ENCODE measurements at regions of chr15 and their contacts with region 1.

Region 1: DNA sequence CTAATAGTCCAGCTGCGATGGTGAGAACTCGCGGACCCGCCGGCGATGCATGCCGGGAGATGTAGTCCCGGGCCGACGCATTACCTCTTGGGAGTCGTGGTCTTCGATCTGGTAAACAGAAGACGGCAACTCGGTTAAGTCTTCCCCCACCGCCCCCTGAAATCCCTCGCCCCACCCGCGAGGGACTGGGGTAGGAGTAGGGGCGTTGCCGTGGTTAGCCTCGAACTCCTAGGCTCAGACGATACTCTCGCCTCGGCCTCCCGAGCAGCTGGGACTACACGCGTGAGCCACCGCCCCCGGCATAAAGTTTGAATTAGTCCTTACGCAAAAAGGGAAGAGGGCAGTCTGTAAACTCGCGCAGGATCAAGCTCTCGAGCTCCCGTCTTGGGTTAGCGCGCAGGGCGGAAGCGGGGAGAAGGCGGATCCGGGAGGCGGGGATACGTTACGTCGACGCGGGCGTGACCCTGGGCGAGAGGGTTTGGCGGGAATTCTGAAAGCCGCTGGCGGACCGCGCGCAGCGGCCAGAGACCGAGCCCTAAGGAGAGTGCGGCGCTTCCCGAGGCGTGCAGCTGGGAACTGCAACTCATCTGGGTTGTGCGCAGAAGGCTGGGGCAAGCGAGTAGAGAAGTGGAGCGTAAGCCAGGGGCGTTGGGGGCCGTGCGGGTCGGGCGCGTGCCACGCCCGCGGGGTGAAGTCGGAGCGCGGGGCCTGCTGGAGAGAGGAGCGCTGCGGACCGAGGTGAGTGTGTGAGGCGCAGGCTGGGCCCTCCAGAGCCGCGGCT is at the start of gene RAD51:
- DNase-seq: peak; percentile 96
- ATAC-seq: peak; percentile 88
- H3K4me3 ChIP-seq: peak within 1 kb of the TSS; percentile 84 to 100 (median 87)
- H3K4me3 Mint-ChIP-seq: peak within 1 kb of the TSS; percentile 100
- H3K27ac ChIP-seq: peak within 1 kb of the TSS; percentile 93 to 94
- H3K27ac Mint-ChIP-seq: peak within 1 kb of the TSS; percentile 99
- H3K4me1 ChIP-seq: peaks cover 7 to 18% of the 10 kb centered on the region in 2 donors
- H3K4me1 Mint-ChIP-seq: peaks cover 25% of the 10 kb centered on the region
- H3K27me3 ChIP-seq: no peaks in the 10 kb centered on the region
- H3K27me3 Mint-ChIP-seq: no peaks in the 10 kb centered on the region
- CTCF ChIP-seq: no peak
- total RNA-seq, gene RAD51: 1.9 and 2.0 TPM in 2 replicates

Region 2: DNA sequence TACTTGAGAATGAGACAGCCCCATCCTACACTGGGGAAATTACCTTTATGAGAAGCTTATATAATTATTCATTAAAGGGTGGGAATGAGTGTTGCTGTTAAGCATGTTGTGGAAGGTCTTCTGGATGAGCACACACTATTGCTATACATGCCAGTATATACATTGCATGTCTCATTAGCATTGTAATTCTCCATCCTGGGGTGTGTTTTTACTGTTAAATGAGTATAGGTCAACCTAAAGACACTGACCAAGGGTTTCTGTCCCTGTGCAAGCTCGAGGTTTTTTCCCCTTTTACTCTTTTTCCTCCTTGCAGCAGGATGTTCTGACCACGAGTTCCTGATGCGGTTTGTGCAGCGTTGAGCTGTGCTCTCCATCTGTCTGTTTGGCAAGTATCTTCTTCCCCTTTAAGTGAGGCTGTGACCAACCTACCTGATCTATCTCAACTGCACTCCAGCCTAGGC is 296.4 kb before region 1 on chr15:
- CTCF ChIA-PET with region 1: no interaction called
- POLR2A ChIA-PET with region 1: no interaction called
- intact Hi-C with region 1: no loop called
- DNase-seq: peak; percentile 57
- ATAC-seq: peak; percentile 84
- H3K4me3 ChIP-seq: peak overlapping the region in 2 of 5 experiments; percentile 19 to 30
- H3K4me3 Mint-ChIP-seq: peak overlapping the region; percentile 71
- H3K27ac ChIP-seq: peak overlapping the region; percentile 2 to 27
- H3K27ac Mint-ChIP-seq: peak overlapping the region; percentile 74
- H3K4me1 ChIP-seq: peaks cover 17 to 21% of the 10 kb centered on the region in 2 donors
- H3K4me1 Mint-ChIP-seq: peaks cover 20% of the 10 kb centered on the region
- H3K27me3 ChIP-seq: no peaks in the 10 kb centered on the region
- H3K27me3 Mint-ChIP-seq: no peaks in the 10 kb centered on the region
- CTCF ChIP-seq: no peak

Region 3: DNA sequence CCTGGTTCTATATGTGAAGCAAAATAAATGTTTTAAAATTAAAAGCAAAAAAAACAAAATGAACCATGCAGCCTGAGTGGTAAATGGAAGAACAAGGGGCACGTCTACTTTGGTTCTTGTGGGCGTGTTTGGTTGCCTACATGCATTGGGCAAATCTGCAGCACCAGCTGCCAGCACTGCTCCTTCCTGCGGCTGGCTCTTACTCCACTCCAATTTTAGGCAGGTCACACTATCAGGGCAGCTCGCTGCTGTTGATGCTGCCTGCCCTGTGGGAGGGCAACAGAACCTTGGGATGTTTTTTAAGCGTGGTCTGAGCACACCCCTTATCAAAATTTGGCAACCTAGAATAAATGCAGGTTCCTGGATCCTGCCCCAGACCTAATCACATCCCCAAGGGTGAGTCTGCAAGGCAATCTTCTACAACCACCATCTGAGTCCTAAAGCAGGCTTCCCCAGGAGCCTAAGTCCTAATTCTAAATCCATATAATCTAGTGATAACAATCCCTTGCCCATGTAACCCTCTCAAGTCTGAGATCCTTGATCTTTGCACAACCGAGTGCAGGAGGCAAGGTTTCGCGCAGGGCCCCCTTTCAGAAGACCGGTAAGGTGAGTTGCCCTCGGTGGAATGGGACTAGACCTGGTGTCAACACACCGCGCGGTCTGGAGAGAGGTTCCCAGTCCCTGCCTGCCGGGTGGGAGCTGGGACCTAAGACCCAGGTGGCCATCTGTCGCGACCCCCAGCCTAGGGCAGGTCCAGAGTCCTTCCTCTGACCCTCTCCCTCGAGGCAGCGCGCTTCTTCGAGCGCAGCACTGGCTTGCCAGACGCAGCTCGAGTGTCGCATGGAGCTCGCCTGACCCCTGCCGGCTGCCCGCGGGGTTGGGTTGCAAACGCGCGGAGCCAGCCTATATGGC is 273.4 kb before region 1 on chr15:
- CTCF ChIA-PET with region 1: no interaction called
- POLR2A ChIA-PET with region 1: no interaction called
- intact Hi-C with region 1: no loop called
- DNase-seq: peak; percentile 83
- ATAC-seq: peak; percentile 96
- H3K4me3 ChIP-seq: no peak overlapping the region
- H3K4me3 Mint-ChIP-seq: no peak overlapping the region
- H3K27ac ChIP-seq: no peak overlapping the region
- H3K27ac Mint-ChIP-seq: no peak overlapping the region
- H3K4me1 ChIP-seq: peaks cover 4 to 7% of the 10 kb centered on the region in 2 donors
- H3K4me1 Mint-ChIP-seq: peaks cover 2% of the 10 kb centered on the region
- H3K27me3 ChIP-seq: no peaks in the 10 kb centered on the region
- H3K27me3 Mint-ChIP-seq: no peaks in the 10 kb centered on the region
- CTCF ChIP-seq: peak; percentile 97

Region 4: GRCh38 chr15:40525855-40526254 is 169.0 kb before region 1 on chr15:
- CTCF ChIA-PET with region 1: interaction called, 11 read pairs
- POLR2A ChIA-PET with region 1: no interaction called
- intact Hi-C with region 1: no loop called
- DNase-seq: no peak
- ATAC-seq: no peak
- H3K4me3 ChIP-seq: no peak overlapping the region
- H3K4me3 Mint-ChIP-seq: no peak overlapping the region
- H3K27ac ChIP-seq: no peak overlapping the region
- H3K27ac Mint-ChIP-seq: no peak overlapping the region
- H3K4me1 ChIP-seq: no peaks in the 10 kb centered on the region
- H3K4me1 Mint-ChIP-seq: peaks cover 2% of the 10 kb centered on the region
- H3K27me3 ChIP-seq: no peaks in the 10 kb centered on the region
- H3K27me3 Mint-ChIP-seq: no peaks in the 10 kb centered on the region
- CTCF ChIP-seq: no peak

Region 5: GRCh38 chr15:40660686-40661085 is 34.2 kb before region 1 on chr15:
- CTCF ChIA-PET with region 1: no interaction called
- POLR2A ChIA-PET with region 1: no interaction called
- intact Hi-C with region 1: no loop called
- DNase-seq: no peak
- ATAC-seq: no peak
- H3K4me3 ChIP-seq: no peak overlapping the region
- H3K4me3 Mint-ChIP-seq: no peak overlapping the region
- H3K27ac ChIP-seq: no peak overlapping the region
- H3K27ac Mint-ChIP-seq: no peak overlapping the region
- H3K4me1 ChIP-seq: no peaks in the 10 kb centered on the region
- H3K4me1 Mint-ChIP-seq: peaks cover 2% of the 10 kb centered on the region
- H3K27me3 ChIP-seq: no peaks in the 10 kb centered on the region
- H3K27me3 Mint-ChIP-seq: no peaks in the 10 kb centered on the region
- CTCF ChIP-seq: no peak

Region 6: GRCh38 chr15:40684381-40684780 is 10.5 kb before region 1 on chr15:
- CTCF ChIA-PET with region 1: interaction called, 25 read pairs
- POLR2A ChIA-PET with region 1: interaction called, 4 read pairs
- intact Hi-C with region 1: loop called (anchors 1 kb)
- DNase-seq: no peak
- ATAC-seq: no peak
- H3K4me3 ChIP-seq: no peak overlapping the region
- H3K4me3 Mint-ChIP-seq: no peak overlapping the region
- H3K27ac ChIP-seq: no peak overlapping the region
- H3K27ac Mint-ChIP-seq: peak overlapping the region; percentile 41
- H3K4me1 ChIP-seq: peaks cover 11 to 15% of the 10 kb centered on the region in 2 donors
- H3K4me1 Mint-ChIP-seq: peaks cover 12% of the 10 kb centered on the region
- H3K27me3 ChIP-seq: no peaks in the 10 kb centered on the region
- H3K27me3 Mint-ChIP-seq: no peaks in the 10 kb centered on the region
- CTCF ChIP-seq: no peak

Region 7: DNA sequence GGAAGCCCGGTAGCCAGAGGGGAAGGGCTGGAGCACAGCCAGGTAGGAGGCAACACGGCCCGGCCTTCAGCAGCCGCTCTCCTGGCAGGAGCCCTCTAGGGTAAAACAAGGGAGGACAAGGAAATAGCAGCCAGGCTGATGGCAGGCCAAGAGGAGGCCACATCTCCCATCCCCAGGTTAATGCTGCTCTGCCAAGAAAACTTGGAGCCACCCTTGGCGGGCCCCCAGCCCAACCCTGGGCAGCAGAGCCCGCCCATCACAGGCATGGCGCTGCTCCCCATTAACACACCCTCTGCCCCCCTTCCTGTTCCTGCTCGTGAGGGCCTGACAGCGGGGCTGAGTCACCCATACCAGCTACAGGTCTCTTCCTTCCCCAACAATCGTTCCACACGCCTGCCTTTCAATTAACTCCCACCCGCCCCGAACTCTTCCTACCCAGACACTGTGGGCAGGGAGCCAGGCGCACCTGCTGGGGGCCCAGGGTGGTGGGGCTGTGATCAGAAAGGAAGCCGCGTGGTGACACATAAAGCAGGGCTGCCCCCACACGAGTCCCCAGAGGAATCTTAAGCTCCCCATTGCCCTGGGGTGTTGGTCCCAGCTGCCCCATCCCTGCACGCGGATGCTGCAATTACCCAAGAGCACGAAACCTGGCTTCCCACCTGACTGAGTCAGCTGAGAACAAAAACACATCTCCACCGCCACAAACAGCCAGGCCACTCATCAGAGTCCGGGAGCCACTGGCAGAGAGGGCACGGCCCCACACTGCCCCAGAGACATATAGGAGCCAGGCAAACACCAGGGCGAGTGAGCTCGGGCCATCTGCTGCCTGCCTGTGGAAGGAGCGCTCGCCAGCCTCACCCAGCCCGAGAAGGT is 74.6 kb after region 1 on chr15 and contains the start of gene C15orf62:
- CTCF ChIA-PET with region 1: interaction called, 5 read pairs
- POLR2A ChIA-PET with region 1: interaction called, 14 read pairs
- intact Hi-C with region 1: loop called (anchors 1 kb)
- DNase-seq: peak; percentile 85
- ATAC-seq: peak; percentile 82
- H3K4me3 ChIP-seq: peak within 1 kb of the TSS in 4 of 5 experiments; percentile 15 to 52 (median 38)
- H3K4me3 Mint-ChIP-seq: peak within 1 kb of the TSS; percentile 88
- H3K27ac ChIP-seq: peak within 1 kb of the TSS; percentile 42 to 78
- H3K27ac Mint-ChIP-seq: peak within 1 kb of the TSS; percentile 95
- H3K4me1 ChIP-seq: peaks cover 45 to 56% of the 10 kb centered on the region in 2 donors
- H3K4me1 Mint-ChIP-seq: peaks cover 51% of the 10 kb centered on the region
- H3K27me3 ChIP-seq: no peaks in the 10 kb centered on the region
- H3K27me3 Mint-ChIP-seq: no peaks in the 10 kb centered on the region
- CTCF ChIP-seq: no peak
- total RNA-seq, gene C15orf62: 8.6 and 9.5 TPM in 2 replicates

Region 8: GRCh38 chr15:40807028-40807887 is 112.4 kb after region 1 on chr15 and contains the starts of genes DNAJC17 and ZFYVE19:
- CTCF ChIA-PET with region 1: interaction called, 4 read pairs
- POLR2A ChIA-PET with region 1: interaction called, 7 read pairs
- intact Hi-C with region 1: loop called (anchors 1 kb)
- DNase-seq: peak; percentile 97
- ATAC-seq: peak; percentile 96
- H3K4me3 ChIP-seq: peak within 1 kb of the TSS; percentile 78 to 100 (median 100)
- H3K4me3 Mint-ChIP-seq: peak within 1 kb of the TSS; percentile 99
- H3K27ac ChIP-seq: peak within 1 kb of the TSS; percentile 86 to 95
- H3K27ac Mint-ChIP-seq: peak within 1 kb of the TSS; percentile 98
- H3K4me1 ChIP-seq: peaks cover 12 to 18% of the 10 kb centered on the region in 2 donors
- H3K4me1 Mint-ChIP-seq: peaks cover 24% of the 10 kb centered on the region
- H3K27me3 ChIP-seq: no peaks in the 10 kb centered on the region
- H3K27me3 Mint-ChIP-seq: no peaks in the 10 kb centered on the region
- CTCF ChIP-seq: peak; percentile 11
- total RNA-seq, gene DNAJC17: 46.1 and 52.3 TPM in 2 replicates
- total RNA-seq, gene ZFYVE19: 29.4 and 29.8 TPM in 2 replicates

Region 9: GRCh38 chr15:41774062-41774881 is 1079.4 kb after region 1 on chr15 and contains the start of gene MAPKBP1:
- CTCF ChIA-PET with region 1: no interaction called
- POLR2A ChIA-PET with region 1: no interaction called
- intact Hi-C with region 1: no loop called
- DNase-seq: peak; percentile 99
- ATAC-seq: peak; percentile 91
- H3K4me3 ChIP-seq: peak within 1 kb of the TSS; percentile 75 to 87 (median 78)
- H3K4me3 Mint-ChIP-seq: peak within 1 kb of the TSS; percentile 99
- H3K27ac ChIP-seq: peak within 1 kb of the TSS; percentile 62 to 71
- H3K27ac Mint-ChIP-seq: peak within 1 kb of the TSS; percentile 96
- H3K4me1 ChIP-seq: peaks cover 30 to 32% of the 10 kb centered on the region in 2 donors
- H3K4me1 Mint-ChIP-seq: peaks cover 57% of the 10 kb centered on the region
- H3K27me3 ChIP-seq: no peaks in the 10 kb centered on the region
- H3K27me3 Mint-ChIP-seq: no peaks in the 10 kb centered on the region
- CTCF ChIP-seq: peak; percentile 83
- total RNA-seq, gene MAPKBP1: 59.2 and 65.5 TPM in 2 replicates